ENCODE measurements at regions of chr7 and their contacts with region 1.

Region 1: DNA sequence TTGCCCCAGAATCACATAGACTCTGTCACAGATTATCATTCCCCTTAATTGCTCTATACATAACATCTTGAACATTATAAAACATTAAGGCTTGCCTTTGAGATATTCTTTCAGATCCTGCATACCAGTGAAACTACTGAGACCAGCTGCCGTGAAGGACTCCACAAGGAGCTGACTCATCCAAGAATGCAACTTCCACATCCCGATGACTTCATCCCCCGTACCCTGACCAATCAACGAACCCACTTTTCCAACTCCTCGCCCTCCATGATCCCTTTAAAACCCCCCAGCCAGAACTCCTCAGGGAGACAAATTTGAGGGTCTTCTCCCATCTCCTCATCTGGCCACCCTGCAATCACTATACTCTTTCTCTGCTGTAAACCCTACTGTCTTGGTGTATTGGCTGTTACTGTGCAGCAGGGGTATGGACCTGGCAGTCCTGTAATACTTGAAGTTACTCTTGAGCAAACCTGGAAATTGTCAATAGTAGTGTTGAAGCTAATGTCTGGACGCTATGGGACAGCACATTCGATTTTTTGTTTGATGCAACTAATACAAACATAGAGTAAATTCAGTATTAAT is 49.8 kb downstream of the HTR5A start:
- DNase-seq: no peak

Region 2: DNA sequence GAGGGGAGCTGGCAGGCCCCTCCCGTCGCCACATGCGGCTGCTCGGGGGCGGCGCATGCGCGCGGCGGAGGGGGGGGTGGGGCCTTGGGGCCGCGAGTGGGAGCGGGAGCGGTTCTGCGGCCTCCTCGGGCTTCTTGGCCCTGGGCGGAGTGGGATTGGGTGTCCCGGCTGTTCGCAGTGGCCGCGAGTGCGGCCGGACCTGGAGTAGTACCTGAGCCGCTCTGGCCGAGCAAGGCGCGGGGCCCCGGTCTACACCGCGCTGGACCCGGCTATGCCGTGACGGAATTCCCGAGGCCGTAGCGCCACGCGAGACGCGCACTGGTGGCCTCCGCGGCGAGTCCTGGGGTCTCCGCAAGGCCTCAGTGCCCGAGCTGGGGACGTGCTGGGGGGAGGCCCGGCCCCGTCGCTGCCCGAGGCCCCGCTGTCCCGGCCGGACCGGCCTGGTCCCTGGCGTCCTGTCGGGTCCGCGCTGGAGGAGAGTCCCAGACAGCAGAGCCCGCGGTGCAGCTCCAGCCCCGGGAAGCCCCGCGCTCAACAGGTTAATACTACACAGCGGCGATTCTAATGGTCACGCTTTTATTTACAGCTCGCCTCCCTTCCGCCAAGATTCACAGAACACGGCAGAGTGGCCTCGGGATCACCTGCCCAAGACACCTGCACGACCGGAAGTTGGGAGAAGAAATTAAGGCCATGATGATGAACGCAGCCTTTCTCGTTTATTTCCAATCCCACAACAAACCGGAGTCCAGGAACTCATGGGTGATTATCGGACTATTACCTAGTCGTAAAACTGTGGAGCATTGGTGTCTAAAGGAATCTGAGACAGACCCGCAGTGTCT is 116.3 kb before region 1 on chr7:
- in situ Hi-C with region 1: loop called (anchors 25 kb)
- DNase-seq: peak; percentile 83

Measured in SK-MEL-5 (cell line).